AG04449 (cell line): ENCODE measurements at regions of chr9 and their contacts with region 1.

Region 1: GRCh38 chr9:86238861-86239770 is 20.3 kb downstream of the C9orf153 start:
- DNase-seq: no peak
- H3K4me3 ChIP-seq: no peak overlapping the region
- CTCF ChIP-seq: no peak

Region 2: DNA sequence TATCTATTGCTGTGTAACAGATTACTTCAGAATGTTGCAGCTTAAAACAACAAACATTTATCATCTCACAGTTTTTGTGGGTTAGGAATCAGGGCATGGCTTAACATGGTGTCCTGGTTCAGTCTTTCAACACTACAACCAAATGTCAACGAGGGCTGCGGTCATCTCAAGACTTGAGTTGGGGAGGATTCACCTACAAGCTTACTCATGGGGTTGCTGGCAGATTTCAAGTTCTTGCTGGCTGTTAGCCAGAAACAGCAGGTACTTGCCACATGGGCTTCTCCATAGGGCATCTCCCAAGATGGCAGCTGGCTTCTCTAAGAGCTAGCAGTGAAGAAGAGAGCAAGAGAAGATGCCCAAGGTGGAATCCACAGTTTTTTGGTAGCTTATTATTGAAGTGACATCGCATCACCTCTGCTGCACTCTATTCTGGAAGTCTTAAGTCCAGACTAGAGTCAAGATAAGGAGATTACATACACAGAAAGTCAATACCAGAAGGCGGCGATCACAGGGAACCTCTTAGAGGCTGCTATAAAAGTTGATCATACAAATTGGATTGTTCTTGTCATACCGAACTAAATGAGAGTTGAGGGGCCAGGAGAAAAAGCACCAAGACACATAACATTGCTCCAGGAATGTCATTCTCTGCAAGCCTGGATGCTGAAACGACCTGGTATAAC is 21.9 kb before region 1 on chr9:
- CTCF ChIA-PET with region 1: no interaction called
- POLR2A ChIA-PET with region 1: no interaction called
- DNase-seq: no peak
- H3K4me3 ChIP-seq: no peak overlapping the region
- CTCF ChIP-seq: no peak

Region 3: GRCh38 chr9:86257391-86257790 is 18.3 kb after region 1 on chr9:
- CTCF ChIA-PET with region 1: interaction called, 16 read pairs
- POLR2A ChIA-PET with region 1: no interaction called
- DNase-seq: no peak
- H3K4me3 ChIP-seq: no peak overlapping the region
- CTCF ChIP-seq: no peak